ENCODE measurements at regions of chr4 and their contacts with region 1.

Region 1: GRCh38 chr4:2281575-2282343 is 19.9 kb upstream of the MXD4 start:
- DNase-seq: peak; percentile 90
- ATAC-seq: peak; percentile 92
- H3K4me3 ChIP-seq: no peak overlapping the region
- H3K4me3 Mint-ChIP-seq: peak overlapping the region; percentile 87
- H3K27ac ChIP-seq: peak overlapping the region; percentile 54 to 83
- H3K27ac Mint-ChIP-seq: peak overlapping the region; percentile 99
- H3K4me1 ChIP-seq: peaks cover 18 to 21% of the 10 kb centered on the region in 2 donors
- H3K4me1 Mint-ChIP-seq: peaks cover 33% of the 10 kb centered on the region
- H3K27me3 ChIP-seq: no peaks in the 10 kb centered on the region
- H3K27me3 Mint-ChIP-seq: no peaks in the 10 kb centered on the region
- CTCF ChIP-seq: peak; percentile 76

Region 2: GRCh38 chr4:2320152-2320551 is 38.4 kb after region 1 on chr4:
- CTCF ChIA-PET with region 1: no interaction called
- POLR2A ChIA-PET with region 1: no interaction called
- intact Hi-C with region 1: loop called (anchors 5 kb)
- DNase-seq: no peak
- ATAC-seq: no peak
- H3K4me3 ChIP-seq: no peak overlapping the region
- H3K4me3 Mint-ChIP-seq: no peak overlapping the region
- H3K27ac ChIP-seq: no peak overlapping the region
- H3K27ac Mint-ChIP-seq: no peak overlapping the region
- H3K4me1 ChIP-seq: no peaks in the 10 kb centered on the region
- H3K4me1 Mint-ChIP-seq: peaks cover 1% of the 10 kb centered on the region
- H3K27me3 ChIP-seq: peaks cover 0 to 7% (median 0%) of the 10 kb centered on the region in 4 experiments
- H3K27me3 Mint-ChIP-seq: peaks cover 15% of the 10 kb centered on the region
- CTCF ChIP-seq: no peak

Region 3: GRCh38 chr4:2354118-2354517 is 72.4 kb after region 1 on chr4:
- CTCF ChIA-PET with region 1: interaction called, 5 read pairs
- POLR2A ChIA-PET with region 1: no interaction called
- intact Hi-C with region 1: loop called (anchors 5 kb)
- DNase-seq: peak; percentile 32
- ATAC-seq: peak; percentile 37
- H3K4me3 ChIP-seq: no peak overlapping the region
- H3K4me3 Mint-ChIP-seq: no peak overlapping the region
- H3K27ac ChIP-seq: no peak overlapping the region
- H3K27ac Mint-ChIP-seq: peak overlapping the region; percentile 32
- H3K4me1 ChIP-seq: peaks cover 11 to 13% of the 10 kb centered on the region in 2 donors
- H3K4me1 Mint-ChIP-seq: peaks cover 15% of the 10 kb centered on the region
- H3K27me3 ChIP-seq: no peaks in the 10 kb centered on the region
- H3K27me3 Mint-ChIP-seq: no peaks in the 10 kb centered on the region
- CTCF ChIP-seq: peak; percentile 42

Measured in B cell (primary cell).